RWPE1 (cell line): ENCODE measurements at regions of chr9 and their contacts with region 1.

Region 1: DNA sequence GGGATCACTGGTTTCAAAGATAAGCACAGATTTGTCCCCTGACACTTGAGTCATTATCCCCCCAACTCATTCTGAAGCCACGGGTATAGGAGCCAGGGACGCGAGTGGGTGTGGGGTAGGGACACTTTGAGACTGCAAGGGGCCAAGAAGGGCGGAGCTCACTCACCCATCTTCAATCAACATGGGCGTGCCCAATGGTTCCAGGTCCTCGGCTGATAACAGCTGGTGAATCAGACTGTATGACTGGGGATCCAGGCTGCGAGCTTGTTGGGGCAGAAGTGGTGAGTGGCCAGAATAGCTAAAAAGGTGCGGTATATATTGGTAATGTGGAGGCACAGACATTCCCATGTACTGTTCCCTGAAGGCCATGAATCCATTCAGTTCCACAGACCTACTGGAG is 30.7 kb upstream of the NR5A1 start:
- DNase-seq: no peak
- H3K27ac ChIP-seq: no peak overlapping the region
- CTCF ChIP-seq: no peak

Region 2: GRCh38 chr9:124357721-124358361 is 180.1 kb before region 1 on chr9:
- CTCF ChIA-PET with region 1: no interaction called
- POLR2A ChIA-PET with region 1: no interaction called
- DNase-seq: no peak
- H3K27ac ChIP-seq: peak overlapping the region; percentile 22
- CTCF ChIP-seq: no peak

Region 3: GRCh38 chr9:124392871-124393460 is 145.0 kb before region 1 on chr9:
- CTCF ChIA-PET with region 1: interaction called, 11 read pairs
- POLR2A ChIA-PET with region 1: no interaction called
- DNase-seq: peak; percentile 98
- H3K27ac ChIP-seq: peak overlapping the region; percentile 54
- CTCF ChIP-seq: peak; percentile 72

Region 4: DNA sequence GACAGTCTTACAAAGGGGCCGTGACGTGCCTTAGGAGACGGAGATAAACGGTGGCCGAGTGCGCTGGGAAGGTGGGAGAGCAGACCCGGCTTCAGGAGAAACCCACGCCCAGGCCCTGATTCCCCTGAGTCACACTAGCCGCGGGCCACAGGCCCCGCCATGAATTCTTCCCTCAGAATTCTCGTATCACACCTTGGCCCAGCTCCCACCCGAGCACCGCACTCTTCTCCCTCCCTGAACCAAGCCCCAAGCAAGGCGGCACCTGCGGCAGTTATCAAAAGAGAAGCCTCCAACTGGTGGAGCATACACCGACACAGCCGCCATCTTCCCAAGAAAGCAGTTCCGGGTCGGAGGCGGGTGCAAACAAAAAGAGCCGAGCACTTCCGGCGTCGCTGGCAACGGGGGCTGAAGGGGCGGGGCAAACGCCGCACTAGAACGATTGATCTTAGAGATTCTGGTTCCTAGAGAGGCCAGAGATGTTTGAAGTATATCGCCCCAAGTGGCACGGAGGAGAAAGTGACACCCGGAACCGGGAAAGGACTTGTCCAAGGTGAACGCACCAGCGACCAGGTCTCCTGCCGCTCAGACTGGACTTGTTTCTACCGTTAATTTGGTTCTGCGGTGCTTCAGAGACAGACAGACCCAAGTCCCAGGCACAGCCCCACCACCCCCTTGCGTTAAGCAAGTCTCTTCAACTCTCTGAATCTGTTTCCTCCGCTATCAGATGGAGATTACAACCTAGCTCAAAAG is 122.6 kb before region 1 on chr9 and contains the start of gene PSMB7:
- CTCF ChIA-PET with region 1: interaction called, 28 read pairs
- POLR2A ChIA-PET with region 1: interaction called, 4 read pairs
- DNase-seq: peak; percentile 99
- H3K27ac ChIP-seq: peak within 1 kb of the TSS; percentile 79
- CTCF ChIP-seq: peak; percentile 96

Region 5: GRCh38 chr9:124420991-124421543 is 116.9 kb before region 1 on chr9:
- CTCF ChIA-PET with region 1: interaction called, 28 read pairs
- POLR2A ChIA-PET with region 1: no interaction called
- DNase-seq: no peak
- H3K27ac ChIP-seq: no peak overlapping the region
- CTCF ChIP-seq: no peak